ENCODE measurements at regions of chr11 and their contacts with region 1.

Region 1: DNA sequence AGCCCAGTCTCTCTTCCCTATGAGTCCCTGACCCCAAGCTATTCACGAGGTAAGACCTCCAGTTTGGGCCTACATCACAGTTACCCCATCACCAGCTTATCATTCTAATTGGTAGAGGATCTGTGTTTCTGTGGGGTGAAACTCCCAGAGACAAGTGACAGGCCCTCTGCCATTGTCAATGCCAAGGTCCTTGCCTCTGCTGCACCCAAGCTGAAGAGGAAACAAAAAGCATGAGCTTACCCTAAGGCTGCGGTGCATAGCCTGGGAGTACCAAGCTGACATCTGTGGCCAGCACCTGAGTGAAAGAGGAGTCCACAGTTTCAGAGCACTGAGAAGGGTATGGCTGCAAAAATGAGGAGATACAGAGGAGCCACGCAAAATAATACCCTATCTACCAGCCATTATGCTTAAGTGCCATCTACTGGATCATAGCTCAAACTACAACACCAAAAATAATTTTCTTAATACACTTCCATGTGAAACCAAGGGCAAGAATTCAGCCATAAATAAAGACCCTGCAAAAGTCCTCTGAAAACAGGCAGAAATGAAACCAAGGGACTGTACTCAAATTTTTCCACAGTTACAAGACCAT is 62.3 kb upstream of the ANO5 start:
- DNase-seq: no peak
- H3K4me3 Mint-ChIP-seq: no peak overlapping the region
- H3K27ac Mint-ChIP-seq: no peak overlapping the region
- H3K4me1 Mint-ChIP-seq: no peaks in the 10 kb centered on the region
- H3K27me3 Mint-ChIP-seq: no peaks in the 10 kb centered on the region

Region 2: GRCh38 chr11:21122523-21122922 is 1008.0 kb before region 1 on chr11:
- CTCF ChIA-PET with region 1: no interaction called
- POLR2A ChIA-PET with region 1: interaction called, 13 read pairs
- DNase-seq: no peak
- H3K4me3 Mint-ChIP-seq: no peak overlapping the region
- H3K27ac Mint-ChIP-seq: no peak overlapping the region
- H3K4me1 Mint-ChIP-seq: no peaks in the 10 kb centered on the region
- H3K27me3 Mint-ChIP-seq: no peaks in the 10 kb centered on the region

Region 3: GRCh38 chr11:21761000-21761399 is 369.6 kb before region 1 on chr11:
- CTCF ChIA-PET with region 1: no interaction called
- POLR2A ChIA-PET with region 1: no interaction called
- DNase-seq: no peak
- H3K4me3 Mint-ChIP-seq: no peak overlapping the region
- H3K27ac Mint-ChIP-seq: no peak overlapping the region
- H3K4me1 Mint-ChIP-seq: no peaks in the 10 kb centered on the region
- H3K27me3 Mint-ChIP-seq: no peaks in the 10 kb centered on the region

Region 4: DNA sequence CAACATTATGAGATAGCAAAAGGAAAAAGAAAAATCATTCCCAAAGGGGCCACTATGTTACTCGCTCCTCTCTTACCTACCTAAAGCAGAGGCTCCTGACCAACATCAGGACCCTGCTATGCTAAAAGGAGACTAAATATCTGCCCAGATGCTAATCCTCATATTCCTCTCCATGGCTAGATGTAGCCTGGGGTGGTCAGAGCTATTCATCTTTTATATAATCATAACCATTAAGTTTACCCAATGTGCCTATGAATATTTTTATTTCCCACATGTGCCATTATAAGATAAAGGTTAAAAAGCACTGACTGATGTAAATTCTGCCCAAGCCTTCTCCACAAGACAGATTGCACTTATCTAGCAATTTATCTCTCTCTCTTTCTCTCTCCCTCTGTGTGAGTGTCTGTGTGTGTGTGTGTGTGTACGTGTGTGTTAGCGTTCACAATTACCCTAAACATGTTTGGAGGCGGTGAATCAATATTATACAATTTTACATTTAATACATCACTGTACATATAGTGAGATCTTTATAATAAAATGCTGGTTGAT is 21.2 kb after region 1 on chr11:
- CTCF ChIA-PET with region 1: no interaction called
- POLR2A ChIA-PET with region 1: no interaction called
- DNase-seq: no peak
- H3K4me3 Mint-ChIP-seq: no peak overlapping the region
- H3K27ac Mint-ChIP-seq: no peak overlapping the region
- H3K4me1 Mint-ChIP-seq: no peaks in the 10 kb centered on the region
- H3K27me3 Mint-ChIP-seq: no peaks in the 10 kb centered on the region